Activated CD4-positive, alpha-beta T cell treated with anti-CD3 and anti-CD28 coated beads for 36 hours (primary cell): ENCODE measurements at regions of chr22 and their contacts with region 1.

Region 1: DNA sequence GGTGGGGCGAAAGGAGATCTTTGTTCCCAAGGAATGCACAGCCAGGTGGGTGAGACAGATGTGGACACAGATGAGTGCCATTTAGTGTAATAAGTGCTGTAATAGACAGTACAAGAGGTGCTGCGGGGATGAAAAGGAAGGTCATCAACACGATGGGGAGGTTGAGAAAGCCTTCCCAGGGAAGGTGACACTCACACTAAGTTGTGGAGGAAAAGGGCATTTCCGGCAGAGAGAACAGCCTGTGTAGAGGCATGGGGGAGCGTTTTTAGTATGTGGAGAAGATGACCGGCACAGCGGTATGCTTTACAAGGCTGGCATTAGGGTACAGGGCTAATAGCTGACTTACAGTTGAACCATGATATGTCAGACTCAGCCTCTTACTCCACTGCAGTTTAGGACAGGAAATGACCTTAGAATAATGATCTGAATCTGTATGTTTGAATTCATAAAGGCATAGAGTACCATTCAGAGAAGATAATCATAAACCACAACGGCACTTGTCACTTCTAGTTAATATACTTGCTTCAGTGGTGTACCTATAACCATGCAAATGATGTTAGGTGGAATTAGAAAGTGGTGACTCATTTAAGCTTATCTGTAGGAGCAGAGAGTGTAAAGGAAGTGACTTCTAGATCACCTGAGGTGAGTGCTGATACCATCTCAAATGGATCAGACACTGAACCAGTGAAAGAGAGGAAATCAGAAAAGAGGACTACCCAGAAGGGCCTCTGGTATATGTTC is 60.6 kb downstream of the FAM83F start:
- DNase-seq: peak; percentile 43
- ATAC-seq: peak; percentile 89
- H3K4me3 Mint-ChIP-seq: peak overlapping the region; percentile 73
- H3K27ac Mint-ChIP-seq: peak overlapping the region; percentile 100
- H3K4me1 Mint-ChIP-seq: peaks cover 79% of the 10 kb centered on the region
- H3K27me3 Mint-ChIP-seq: no peaks in the 10 kb centered on the region

Region 2: DNA sequence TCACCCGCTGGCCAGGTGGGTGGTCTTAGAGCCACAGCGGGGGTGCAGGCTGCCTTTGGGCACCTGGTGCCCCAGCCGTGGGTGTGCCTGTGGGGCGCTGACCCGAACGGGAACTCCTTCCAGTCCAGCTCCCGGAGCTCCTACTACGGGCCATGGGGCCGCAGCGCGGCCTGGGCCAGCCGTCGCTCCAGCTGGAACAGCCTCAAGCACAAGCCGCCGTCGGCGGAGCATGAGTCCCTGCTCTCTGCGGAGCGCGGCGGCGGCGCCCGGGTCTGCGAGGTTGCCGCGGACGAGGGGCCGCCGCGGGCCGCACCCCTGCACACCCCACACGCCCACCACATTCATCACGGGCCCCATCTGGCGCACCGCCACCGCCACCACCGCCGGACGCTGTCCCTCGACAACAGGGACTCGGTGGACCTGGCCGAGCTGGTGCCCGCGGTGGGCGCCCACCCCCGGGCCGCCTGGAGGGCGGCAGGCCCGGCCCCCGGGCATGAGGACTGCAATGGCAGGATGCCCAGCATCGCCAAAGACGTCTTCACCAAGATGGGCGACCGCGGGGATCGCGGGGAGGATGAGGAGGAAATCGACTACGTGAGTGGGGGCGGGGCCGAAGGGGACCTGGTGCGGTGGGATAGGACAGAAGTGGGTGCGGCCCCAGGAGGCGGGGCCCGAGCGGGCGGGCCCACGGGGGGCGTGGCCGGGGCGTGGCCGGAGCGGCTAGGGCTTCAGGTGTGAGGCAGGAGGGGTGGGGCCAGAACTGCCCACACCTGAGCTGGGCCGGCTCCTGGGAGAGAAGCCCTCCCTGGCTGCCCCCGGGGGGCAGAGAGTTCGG is 393.3 kb before region 1 on chr22:
- CTCF ChIA-PET with region 1: no interaction called
- POLR2A ChIA-PET with region 1: no interaction called
- intact Hi-C with region 1: no loop called
- DNase-seq: peak; percentile 92
- ATAC-seq: peak; percentile 79
- H3K4me3 Mint-ChIP-seq: peak overlapping the region; percentile 69
- H3K27ac Mint-ChIP-seq: no peak overlapping the region
- H3K4me1 Mint-ChIP-seq: peaks cover 47% of the 10 kb centered on the region
- H3K27me3 Mint-ChIP-seq: peaks cover 4% of the 10 kb centered on the region

Region 3: DNA sequence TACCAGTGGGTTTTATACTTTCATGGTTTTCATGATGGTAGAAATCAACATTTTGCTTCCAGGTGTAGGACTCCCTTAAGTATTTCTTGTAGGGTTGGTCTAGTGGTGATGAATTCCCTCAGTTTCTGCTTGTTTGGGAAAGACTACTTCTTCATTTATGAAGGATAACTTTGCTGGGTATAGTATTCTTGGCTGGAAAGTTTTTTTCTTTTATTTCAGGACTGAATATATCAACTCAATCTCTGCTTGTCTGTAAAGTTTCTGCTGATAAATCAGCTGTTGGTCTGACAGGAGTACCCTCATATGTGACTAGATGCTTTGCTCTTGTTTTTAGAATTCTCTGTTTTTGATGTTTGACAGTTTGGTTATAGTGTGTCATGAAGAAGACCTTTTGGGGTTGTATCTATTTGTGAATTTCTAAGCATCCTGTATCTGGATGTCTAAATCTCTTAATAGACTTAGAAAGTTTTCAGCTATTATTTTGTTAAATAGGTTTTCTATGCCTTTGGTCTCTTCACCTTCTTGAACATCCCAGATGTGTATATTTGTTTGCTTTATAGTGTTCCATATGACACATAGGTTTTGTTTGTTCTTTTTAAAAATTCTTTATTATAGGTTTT is 257.7 kb before region 1 on chr22:
- CTCF ChIA-PET with region 1: no interaction called
- POLR2A ChIA-PET with region 1: no interaction called
- intact Hi-C with region 1: no loop called
- DNase-seq: no peak
- ATAC-seq: no peak
- H3K4me3 Mint-ChIP-seq: no peak overlapping the region
- H3K27ac Mint-ChIP-seq: no peak overlapping the region
- H3K4me1 Mint-ChIP-seq: no peaks in the 10 kb centered on the region
- H3K27me3 Mint-ChIP-seq: no peaks in the 10 kb centered on the region

Region 4: GRCh38 chr22:40044102-40044869 is 11.0 kb before region 1 on chr22:
- CTCF ChIA-PET with region 1: interaction called, 21 read pairs
- POLR2A ChIA-PET with region 1: interaction called, 22 read pairs
- intact Hi-C with region 1: loop called (anchors 1 kb)
- DNase-seq: peak; percentile 98
- ATAC-seq: peak; percentile 91
- H3K4me3 Mint-ChIP-seq: peak overlapping the region; percentile 87
- H3K27ac Mint-ChIP-seq: peak overlapping the region; percentile 99
- H3K4me1 Mint-ChIP-seq: peaks cover 24% of the 10 kb centered on the region
- H3K27me3 Mint-ChIP-seq: peaks cover 2% of the 10 kb centered on the region

Region 5: DNA sequence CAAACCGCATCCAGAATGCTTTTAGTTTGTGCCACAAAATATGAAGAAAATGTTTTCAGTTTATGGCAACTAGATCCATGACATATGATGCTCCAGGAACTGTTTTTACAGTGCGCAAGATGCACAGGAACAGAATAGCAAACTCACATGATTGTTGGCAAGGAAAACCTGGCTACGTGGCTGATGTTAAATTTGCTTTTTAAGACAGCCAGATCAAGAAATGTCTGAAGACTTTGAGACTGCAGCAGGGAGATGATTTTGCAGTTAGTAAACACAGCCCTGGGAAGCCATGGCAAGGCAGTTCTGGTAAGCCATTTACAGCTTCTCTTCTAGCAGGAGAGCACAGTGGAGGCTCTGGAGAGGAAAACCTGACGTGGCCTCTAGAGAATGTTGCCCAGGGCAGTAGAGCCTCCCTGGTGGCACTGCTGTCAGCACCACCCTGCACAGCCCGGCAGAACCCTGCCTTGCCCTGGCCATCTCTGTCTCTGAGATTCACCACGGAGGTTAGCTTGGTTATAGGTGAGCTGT is 52.6 kb after region 1 on chr22:
- CTCF ChIA-PET with region 1: interaction called, 3 read pairs
- POLR2A ChIA-PET with region 1: interaction called, 3 read pairs
- intact Hi-C with region 1: loop called in 1 of 2 experiments (anchors 5 kb)
- DNase-seq: peak; percentile 65
- ATAC-seq: peak; percentile 88
- H3K4me3 Mint-ChIP-seq: peak overlapping the region; percentile 68
- H3K27ac Mint-ChIP-seq: peak overlapping the region; percentile 91
- H3K4me1 Mint-ChIP-seq: peaks cover 80% of the 10 kb centered on the region
- H3K27me3 Mint-ChIP-seq: no peaks in the 10 kb centered on the region

Region 6: DNA sequence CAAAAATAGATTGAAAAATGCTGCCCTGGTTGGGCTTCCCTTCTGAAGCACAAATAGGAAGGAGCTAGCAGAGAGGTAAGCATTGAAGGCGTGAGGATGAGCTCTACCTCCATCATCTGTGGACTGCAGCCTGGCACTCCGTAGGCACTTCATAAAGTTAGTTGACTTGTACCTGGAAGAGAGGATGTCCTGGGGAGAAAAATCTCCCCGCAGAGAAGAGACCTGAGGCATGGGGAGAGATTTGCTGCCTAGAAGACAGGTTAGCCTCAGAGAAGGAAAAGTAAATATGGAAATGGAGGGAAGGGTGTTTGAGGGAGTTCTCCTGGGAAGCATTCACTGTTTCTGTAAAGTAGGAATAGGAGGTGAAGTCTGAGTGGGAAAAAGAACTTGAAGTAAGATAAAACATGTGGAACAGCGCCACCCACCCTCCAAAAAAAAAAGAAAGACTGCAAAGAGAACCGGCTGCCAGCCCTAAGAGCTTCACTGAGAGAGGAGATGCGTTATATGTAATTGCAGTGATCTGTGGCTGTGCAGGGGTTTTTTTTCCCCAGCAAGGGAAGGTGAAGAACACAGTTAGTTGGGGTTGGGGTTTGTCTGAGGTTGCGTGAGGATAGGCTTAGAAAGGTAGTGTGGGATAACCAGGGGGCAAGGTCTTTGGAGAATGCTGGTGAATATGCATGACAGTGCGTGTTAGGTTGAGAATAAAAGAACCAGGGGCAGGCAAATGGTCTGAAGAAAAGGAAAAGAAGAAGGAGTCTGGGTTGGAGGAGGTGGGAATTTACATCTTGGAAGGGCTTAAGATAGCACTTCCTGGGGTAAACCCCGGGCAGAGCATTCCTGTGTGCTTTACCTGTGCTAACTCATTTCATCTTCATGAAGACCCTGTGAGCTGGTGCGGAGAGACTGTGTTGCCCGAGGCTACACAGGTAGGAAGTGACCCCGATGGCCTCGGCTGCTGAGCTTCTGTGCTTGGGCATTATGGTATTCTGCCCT is 138.4 kb after region 1 on chr22:
- CTCF ChIA-PET with region 1: interaction called, 5 read pairs
- POLR2A ChIA-PET with region 1: no interaction called
- intact Hi-C with region 1: loop called in 1 of 2 experiments (anchors 5 kb)
- DNase-seq: no peak
- ATAC-seq: no peak
- H3K4me3 Mint-ChIP-seq: no peak overlapping the region
- H3K27ac Mint-ChIP-seq: peak overlapping the region; percentile 72
- H3K4me1 Mint-ChIP-seq: peaks cover 86% of the 10 kb centered on the region
- H3K27me3 Mint-ChIP-seq: no peaks in the 10 kb centered on the region

Region 7: GRCh38 chr22:40250608-40251007 is 195.3 kb after region 1 on chr22:
- CTCF ChIA-PET with region 1: no interaction called
- POLR2A ChIA-PET with region 1: no interaction called
- intact Hi-C with region 1: loop called in 1 of 2 experiments (anchors 2 kb)
- DNase-seq: peak; percentile 66
- ATAC-seq: peak; percentile 86
- H3K4me3 Mint-ChIP-seq: no peak overlapping the region
- H3K27ac Mint-ChIP-seq: peak overlapping the region; percentile 69
- H3K4me1 Mint-ChIP-seq: peaks cover 71% of the 10 kb centered on the region
- H3K27me3 Mint-ChIP-seq: no peaks in the 10 kb centered on the region